CD4-positive, alpha-beta memory T cell (primary cell): ENCODE measurements at regions of chr22 and their contacts with region 1.

Region 1: GRCh38 chr22:36301384-36301828 is 48.5 kb downstream of the APOL1 start:
- DNase-seq: peak; percentile 80 to 83 (median 80)
- H3K4me3 ChIP-seq: no peak overlapping the region
- H3K4me3 Mint-ChIP-seq: peak overlapping the region in 1 of 8 donors; percentile 49
- H3K27ac ChIP-seq: peak overlapping the region; percentile 8
- H3K27ac Mint-ChIP-seq: peak overlapping the region; percentile 57 to 89 (median 81)
- H3K4me1 ChIP-seq: peaks cover 11% of the 10 kb centered on the region
- H3K4me1 Mint-ChIP-seq: peaks cover 5 to 24% (median 14%) of the 10 kb centered on the region in 4 donors
- H3K27me3 ChIP-seq: no peaks in the 10 kb centered on the region
- H3K27me3 Mint-ChIP-seq: no peaks in the 10 kb centered on the region

Region 2: GRCh38 chr22:36221799-36222751 is 79.3 kb before region 1 on chr22:
- CTCF ChIA-PET with region 1: no interaction called
- POLR2A ChIA-PET with region 1: no interaction called
- intact Hi-C with region 1: no loop called
- DNase-seq: peak; percentile 26 to 50 (median 37)
- H3K4me3 ChIP-seq: no peak overlapping the region
- H3K4me3 Mint-ChIP-seq: peak overlapping the region in 7 of 8 donors; percentile 54 to 73 (median 66)
- H3K27ac ChIP-seq: no peak overlapping the region
- H3K27ac Mint-ChIP-seq: peak overlapping the region in 3 of 7 donors; percentile 58 to 82 (median 69)
- H3K4me1 ChIP-seq: peaks cover 3% of the 10 kb centered on the region
- H3K4me1 Mint-ChIP-seq: peaks cover 4 to 8% (median 5%) of the 10 kb centered on the region in 4 donors
- H3K27me3 ChIP-seq: no peaks in the 10 kb centered on the region
- H3K27me3 Mint-ChIP-seq: peaks cover 9 to 14% of the 10 kb centered on the region in 2 donors

Region 3: GRCh38 chr22:36286471-36287224 is 14.8 kb before region 1 on chr22:
- CTCF ChIA-PET with region 1: interaction called, 24 read pairs
- POLR2A ChIA-PET with region 1: interaction called, 6 read pairs
- intact Hi-C with region 1: no loop called
- DNase-seq: peak in 4 of 5 donors; percentile 56 to 68 (median 60)
- H3K4me3 ChIP-seq: no peak overlapping the region
- H3K4me3 Mint-ChIP-seq: peak overlapping the region in 6 of 8 donors; percentile 29 to 73 (median 56)
- H3K27ac ChIP-seq: peak overlapping the region; percentile 10
- H3K27ac Mint-ChIP-seq: peak overlapping the region; percentile 83 to 94 (median 89)
- H3K4me1 ChIP-seq: peaks cover 43% of the 10 kb centered on the region
- H3K4me1 Mint-ChIP-seq: peaks cover 20 to 48% (median 34%) of the 10 kb centered on the region in 4 donors
- H3K27me3 ChIP-seq: no peaks in the 10 kb centered on the region
- H3K27me3 Mint-ChIP-seq: no peaks in the 10 kb centered on the region

Region 4: GRCh38 chr22:36359181-36359996 is 58.0 kb after region 1 on chr22:
- CTCF ChIA-PET with region 1: interaction called, 16 read pairs
- POLR2A ChIA-PET with region 1: interaction called, 4 read pairs
- intact Hi-C with region 1: loop called (anchors 2 kb)
- DNase-seq: peak in 1 of 5 donors; percentile 63
- H3K4me3 ChIP-seq: no peak overlapping the region
- H3K4me3 Mint-ChIP-seq: peak overlapping the region; percentile 35 to 89 (median 76)
- H3K27ac ChIP-seq: peak overlapping the region; percentile 55
- H3K27ac Mint-ChIP-seq: peak overlapping the region; percentile 91 to 98 (median 95)
- H3K4me1 ChIP-seq: peaks cover 100% of the 10 kb centered on the region
- H3K4me1 Mint-ChIP-seq: peaks cover 79 to 99% (median 91%) of the 10 kb centered on the region in 4 donors
- H3K27me3 ChIP-seq: no peaks in the 10 kb centered on the region
- H3K27me3 Mint-ChIP-seq: no peaks in the 10 kb centered on the region

Region 5: GRCh38 chr22:36379593-36380361 is 78.4 kb after region 1 on chr22:
- CTCF ChIA-PET with region 1: interaction called, 34 read pairs
- POLR2A ChIA-PET with region 1: interaction called, 5 read pairs
- intact Hi-C with region 1: loop called (anchors 2 kb)
- DNase-seq: peak; percentile 58 to 80 (median 67)
- H3K4me3 ChIP-seq: peak overlapping the region; percentile 45 to 55
- H3K4me3 Mint-ChIP-seq: peak overlapping the region; percentile 75 to 92 (median 84)
- H3K27ac ChIP-seq: peak overlapping the region; percentile 70
- H3K27ac Mint-ChIP-seq: peak overlapping the region; percentile 92 to 99 (median 98)
- H3K4me1 ChIP-seq: peaks cover 96% of the 10 kb centered on the region
- H3K4me1 Mint-ChIP-seq: peaks cover 54 to 97% (median 77%) of the 10 kb centered on the region in 4 donors
- H3K27me3 ChIP-seq: no peaks in the 10 kb centered on the region
- H3K27me3 Mint-ChIP-seq: no peaks in the 10 kb centered on the region

Region 6: GRCh38 chr22:36443198-36443770 is 141.9 kb after region 1 on chr22:
- CTCF ChIA-PET with region 1: no interaction called
- POLR2A ChIA-PET with region 1: no interaction called
- intact Hi-C with region 1: no loop called
- DNase-seq: no peak
- H3K4me3 ChIP-seq: no peak overlapping the region
- H3K4me3 Mint-ChIP-seq: no peak overlapping the region
- H3K27ac ChIP-seq: no peak overlapping the region
- H3K27ac Mint-ChIP-seq: no peak overlapping the region
- H3K4me1 ChIP-seq: peaks cover 18% of the 10 kb centered on the region
- H3K4me1 Mint-ChIP-seq: peaks cover 12 to 29% (median 21%) of the 10 kb centered on the region in 4 donors
- H3K27me3 ChIP-seq: no peaks in the 10 kb centered on the region
- H3K27me3 Mint-ChIP-seq: no peaks in the 10 kb centered on the region

Region 7: DNA sequence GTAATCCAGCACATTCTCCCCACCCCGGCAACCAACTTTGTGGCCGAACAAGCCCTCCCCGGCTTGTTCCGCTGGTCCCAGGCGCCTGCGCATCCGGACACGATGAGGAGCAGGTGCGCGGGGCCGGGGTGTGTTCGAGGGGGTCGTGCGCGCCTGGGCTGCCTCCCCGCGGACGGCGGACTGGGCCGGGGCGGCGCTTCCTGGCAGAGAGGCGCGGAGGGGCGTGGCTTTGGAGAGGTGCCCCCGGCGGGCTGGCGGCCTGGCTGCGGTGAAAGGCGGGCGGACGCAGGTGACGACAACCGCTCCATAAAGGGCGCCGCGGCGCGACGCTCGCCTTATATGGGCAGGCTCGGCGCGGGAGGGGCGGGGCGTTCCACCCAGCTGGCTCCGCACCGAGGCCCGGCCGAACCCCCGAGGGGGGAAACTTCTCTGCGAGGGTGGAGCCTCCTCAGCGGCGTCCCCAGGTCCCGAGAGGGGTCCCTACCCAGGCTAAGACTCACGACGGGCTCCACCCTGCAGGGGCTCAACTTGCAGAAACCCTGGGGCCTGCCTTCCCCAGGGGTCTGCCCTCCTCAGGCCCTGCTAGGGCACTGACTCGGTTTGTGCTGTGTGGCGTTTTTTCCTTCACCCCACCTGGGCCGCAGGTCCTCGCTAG is 153.6 kb after region 1 on chr22:
- CTCF ChIA-PET with region 1: interaction called, 12 read pairs
- POLR2A ChIA-PET with region 1: interaction called, 5 read pairs
- intact Hi-C with region 1: no loop called
- DNase-seq: peak; percentile 93 to 95 (median 94)
- H3K4me3 ChIP-seq: peak overlapping the region; percentile 57 to 78
- H3K4me3 Mint-ChIP-seq: peak overlapping the region; percentile 53 to 85 (median 82)
- H3K27ac ChIP-seq: peak overlapping the region; percentile 88
- H3K27ac Mint-ChIP-seq: peak overlapping the region; percentile 92 to 98 (median 93)
- H3K4me1 ChIP-seq: peaks cover 55% of the 10 kb centered on the region
- H3K4me1 Mint-ChIP-seq: peaks cover 29 to 48% (median 44%) of the 10 kb centered on the region in 4 donors
- H3K27me3 ChIP-seq: no peaks in the 10 kb centered on the region
- H3K27me3 Mint-ChIP-seq: no peaks in the 10 kb centered on the region

Region 8: DNA sequence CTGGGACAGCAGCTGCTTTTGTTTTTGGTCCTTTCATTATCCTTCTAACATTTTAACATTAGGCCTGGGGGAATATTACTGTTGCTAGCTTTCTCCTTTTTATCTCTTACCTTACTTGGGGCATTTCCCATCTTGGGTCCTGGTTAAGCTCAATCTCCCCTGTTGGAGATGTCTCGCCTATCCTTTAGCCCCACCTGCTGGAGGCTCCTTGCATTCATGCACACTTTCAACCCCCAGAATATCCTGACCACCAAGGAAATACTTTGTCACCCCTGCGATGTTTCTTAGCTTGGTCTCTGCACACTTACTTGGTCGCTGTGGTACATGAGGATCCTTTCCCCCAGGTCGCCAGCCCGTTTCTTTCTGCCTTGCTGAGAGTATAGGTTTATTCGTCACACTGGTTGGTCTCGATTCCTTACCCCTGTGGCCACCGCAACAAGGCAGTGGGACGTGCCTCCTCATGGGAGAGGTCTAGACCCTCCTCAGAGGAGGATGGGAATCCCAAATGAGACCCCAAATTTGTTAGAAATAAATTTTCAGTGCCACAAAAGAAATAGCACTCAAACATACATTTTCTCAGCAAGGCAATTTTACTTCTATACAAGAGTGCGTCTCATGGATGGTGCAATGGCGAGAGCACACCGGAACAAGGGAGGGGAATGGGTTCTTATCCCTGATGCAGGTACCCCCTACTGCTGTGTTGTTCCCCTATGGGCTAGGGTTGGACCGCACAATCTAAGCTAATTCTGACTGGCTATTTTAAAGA is 185.4 kb after region 1 on chr22:
- CTCF ChIA-PET with region 1: interaction called, 37 read pairs
- POLR2A ChIA-PET with region 1: interaction called, 3 read pairs
- intact Hi-C with region 1: no loop called
- DNase-seq: peak; percentile 61 to 72 (median 63)
- H3K4me3 ChIP-seq: no peak overlapping the region
- H3K4me3 Mint-ChIP-seq: no peak overlapping the region
- H3K27ac ChIP-seq: no peak overlapping the region
- H3K27ac Mint-ChIP-seq: peak overlapping the region in 3 of 7 donors; percentile 43 to 65 (median 64)
- H3K4me1 ChIP-seq: peaks cover 5% of the 10 kb centered on the region
- H3K4me1 Mint-ChIP-seq: peaks cover 4 to 12% (median 5%) of the 10 kb centered on the region in 4 donors
- H3K27me3 ChIP-seq: no peaks in the 10 kb centered on the region
- H3K27me3 Mint-ChIP-seq: no peaks in the 10 kb centered on the region

Region 9: DNA sequence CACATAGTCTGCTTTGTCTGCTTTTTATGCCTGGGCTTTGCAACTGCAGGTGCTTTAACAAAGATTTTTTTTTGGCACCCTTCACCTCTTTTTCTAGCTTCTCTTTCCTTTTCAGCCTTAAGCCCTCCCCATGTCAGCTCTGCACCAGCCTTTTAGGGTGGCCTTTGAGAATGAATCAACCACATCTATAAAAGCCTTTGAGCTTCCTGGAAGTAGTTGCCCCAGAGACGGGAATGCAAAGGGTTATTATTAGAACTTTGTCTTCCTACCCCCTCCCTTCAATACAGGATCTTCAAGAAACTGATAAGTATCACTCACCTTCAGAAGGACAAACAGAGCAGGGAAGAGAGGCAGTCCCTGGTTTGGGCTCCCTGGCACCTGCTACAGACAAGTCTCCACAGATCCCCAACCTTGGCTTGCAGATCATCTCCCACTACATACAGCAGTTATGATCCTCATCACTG is 507.4 kb after region 1 on chr22:
- CTCF ChIA-PET with region 1: no interaction called
- POLR2A ChIA-PET with region 1: no interaction called
- intact Hi-C with region 1: no loop called
- DNase-seq: peak in 2 of 5 donors; percentile 6 to 14
- H3K4me3 ChIP-seq: no peak overlapping the region
- H3K4me3 Mint-ChIP-seq: peak overlapping the region in 1 of 8 donors; percentile 43
- H3K27ac ChIP-seq: no peak overlapping the region
- H3K27ac Mint-ChIP-seq: peak overlapping the region in 3 of 7 donors; percentile 22 to 59 (median 52)
- H3K4me1 ChIP-seq: peaks cover 15% of the 10 kb centered on the region
- H3K4me1 Mint-ChIP-seq: peaks cover 13 to 22% (median 15%) of the 10 kb centered on the region in 4 donors
- H3K27me3 ChIP-seq: no peaks in the 10 kb centered on the region
- H3K27me3 Mint-ChIP-seq: peaks cover 11 to 16% of the 10 kb centered on the region in 2 donors